Caco-2 (cell line): ENCODE measurements at regions of chr5 and their contacts with region 1.

Region 1: GRCh38 chr5:59188419-59189225 is 605.7 kb downstream of the RAB3C start:
- DNase-seq: peak; percentile 72 to 77
- H3K4me3 ChIP-seq: no peak overlapping the region; the same call in 1 of the 2 replicates
- H3K4me3 Mint-ChIP-seq: peak overlapping the region; percentile 56
- H3K27ac Mint-ChIP-seq: no peak overlapping the region
- H3K4me1 ChIP-seq: peaks cover 6% of the 10 kb centered on the region; the same call in 1 of the 2 replicates
- H3K4me1 Mint-ChIP-seq: peaks cover 19% of the 10 kb centered on the region
- H3K27me3 ChIP-seq: no peaks in the 10 kb centered on the region
- H3K27me3 Mint-ChIP-seq: no peaks in the 10 kb centered on the region
- CTCF ChIP-seq: peak; percentile 60 to 73

Region 2: GRCh38 chr5:59218424-59219045 is 29.9 kb after region 1 on chr5:
- CTCF ChIA-PET with region 1: interaction called, 3 read pairs
- POLR2A ChIA-PET with region 1: no interaction called
- intact Hi-C with region 1: loop called (anchors 2 kb)
- DNase-seq: no peak
- H3K4me3 ChIP-seq: no peak overlapping the region
- H3K4me3 Mint-ChIP-seq: no peak overlapping the region
- H3K27ac Mint-ChIP-seq: no peak overlapping the region
- H3K4me1 ChIP-seq: no peaks in the 10 kb centered on the region; the same call in 1 of the 2 replicates
- H3K4me1 Mint-ChIP-seq: peaks cover 10% of the 10 kb centered on the region
- H3K27me3 ChIP-seq: no peaks in the 10 kb centered on the region
- H3K27me3 Mint-ChIP-seq: no peaks in the 10 kb centered on the region
- CTCF ChIP-seq: peak; percentile 5 to 52

Region 3: DNA sequence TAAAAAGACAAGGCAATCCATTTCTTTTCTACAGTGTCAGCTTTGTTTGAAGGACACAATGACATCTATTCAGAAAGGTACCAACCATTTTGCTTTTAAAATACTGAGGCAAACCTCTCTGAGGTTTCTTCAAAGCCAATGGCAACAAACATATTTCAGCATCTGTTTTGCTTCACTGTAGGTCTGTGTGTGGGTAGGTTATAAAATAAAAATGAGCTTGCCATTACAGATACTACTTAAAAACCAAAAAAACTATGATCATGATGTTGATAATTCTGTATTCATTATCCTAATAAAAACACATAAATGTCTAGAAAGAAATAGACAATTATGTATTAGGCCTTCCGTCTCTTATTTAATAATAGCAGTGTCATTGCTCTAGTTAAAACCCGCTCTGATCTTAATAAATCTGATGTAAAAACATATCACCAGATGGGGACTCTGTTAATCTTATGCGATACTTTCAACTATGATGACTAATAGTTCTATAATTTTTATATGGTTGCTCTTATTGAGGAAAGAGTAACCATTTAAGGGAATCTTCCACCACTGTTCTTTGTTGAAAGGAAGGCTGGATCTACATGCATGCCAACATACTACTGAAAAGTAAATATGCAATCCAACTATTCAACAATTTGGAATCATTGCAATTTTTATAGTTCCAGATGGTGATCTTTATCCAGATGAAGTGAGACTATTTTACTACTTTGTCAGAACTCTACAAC is 57.7 kb after region 1 on chr5:
- CTCF ChIA-PET with region 1: no interaction called
- POLR2A ChIA-PET with region 1: no interaction called
- intact Hi-C with region 1: no loop called
- DNase-seq: no peak
- H3K4me3 ChIP-seq: no peak overlapping the region
- H3K4me3 Mint-ChIP-seq: no peak overlapping the region
- H3K27ac Mint-ChIP-seq: no peak overlapping the region
- H3K4me1 ChIP-seq: 0 out of 2 replicates have a peak, but pooled peaks cover 4% of the 10 kb centered on the region
- H3K4me1 Mint-ChIP-seq: no peaks in the 10 kb centered on the region
- H3K27me3 ChIP-seq: no peaks in the 10 kb centered on the region
- H3K27me3 Mint-ChIP-seq: no peaks in the 10 kb centered on the region
- CTCF ChIP-seq: no peak

Region 4: DNA sequence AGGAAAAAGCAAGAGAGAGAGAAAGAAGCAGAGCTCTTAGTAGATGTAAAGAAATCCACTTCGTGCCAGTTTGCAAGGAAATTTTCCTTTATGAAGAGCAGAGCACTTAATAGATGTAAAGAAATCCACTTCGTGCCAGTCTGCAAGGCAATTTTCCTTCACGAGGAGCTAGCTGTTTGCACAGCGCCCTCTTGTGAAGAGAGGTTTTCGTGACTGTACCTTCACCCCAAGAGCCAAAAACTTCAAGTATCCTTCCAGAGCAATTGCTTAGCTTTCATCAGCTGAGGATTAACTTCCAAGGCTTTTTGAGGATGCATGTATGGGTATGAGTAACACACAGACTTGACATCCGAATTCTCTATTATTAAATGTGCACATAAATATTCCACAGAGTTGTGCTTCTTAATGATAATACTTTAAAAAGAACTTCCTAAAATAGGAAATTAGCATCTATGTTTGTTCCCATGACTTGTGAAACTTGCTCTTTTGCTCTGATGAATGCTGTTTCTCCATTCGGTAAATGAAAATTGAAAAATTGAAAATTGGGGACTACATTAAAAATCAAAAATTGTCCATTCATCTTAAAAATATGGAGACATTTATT is 179.3 kb after region 1 on chr5:
- CTCF ChIA-PET with region 1: interaction called, 23 read pairs
- POLR2A ChIA-PET with region 1: no interaction called
- intact Hi-C with region 1: loop called (anchors 1 kb)
- DNase-seq: peak; percentile 63
- H3K4me3 ChIP-seq: no peak overlapping the region
- H3K4me3 Mint-ChIP-seq: no peak overlapping the region
- H3K27ac Mint-ChIP-seq: no peak overlapping the region
- H3K4me1 ChIP-seq: no peaks in the 10 kb centered on the region
- H3K4me1 Mint-ChIP-seq: no peaks in the 10 kb centered on the region
- H3K27me3 ChIP-seq: no peaks in the 10 kb centered on the region
- H3K27me3 Mint-ChIP-seq: no peaks in the 10 kb centered on the region
- CTCF ChIP-seq: peak; percentile 67 to 87

Region 5: DNA sequence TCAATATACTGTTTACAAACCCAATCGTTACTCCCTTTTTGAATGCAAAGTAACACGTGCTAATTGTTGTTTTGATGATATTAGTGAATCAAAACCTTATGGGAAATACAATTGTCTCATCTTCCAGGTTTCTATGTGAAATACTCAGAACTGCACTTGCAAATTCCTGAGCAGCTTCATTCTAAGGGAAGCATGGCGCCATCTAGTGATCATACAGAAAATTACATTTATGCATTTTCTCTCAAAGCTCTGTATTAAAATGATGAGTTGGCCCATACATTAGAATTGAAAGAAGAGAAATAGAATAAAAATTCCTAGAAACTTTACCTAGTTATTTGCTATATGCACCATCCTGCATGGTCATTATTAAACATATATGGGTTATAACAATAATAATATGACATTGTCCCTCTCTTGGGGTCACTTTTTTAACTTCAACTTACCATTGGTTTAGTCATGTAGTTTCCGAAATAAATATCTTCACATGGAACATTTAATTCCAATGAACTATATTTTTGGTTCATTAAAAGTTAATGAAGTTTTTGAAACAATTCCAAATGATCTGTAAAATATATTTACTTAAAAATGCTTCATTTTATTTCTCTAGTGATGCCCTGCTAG is 484.9 kb after region 1 on chr5:
- CTCF ChIA-PET with region 1: no interaction called
- POLR2A ChIA-PET with region 1: no interaction called
- intact Hi-C with region 1: loop called (anchors 5 kb)
- DNase-seq: peak in 1 of 2 experiments; percentile 52
- H3K4me3 ChIP-seq: no peak overlapping the region
- H3K4me3 Mint-ChIP-seq: no peak overlapping the region
- H3K27ac Mint-ChIP-seq: no peak overlapping the region
- H3K4me1 ChIP-seq: no peaks in the 10 kb centered on the region
- H3K4me1 Mint-ChIP-seq: no peaks in the 10 kb centered on the region
- H3K27me3 ChIP-seq: no peaks in the 10 kb centered on the region
- H3K27me3 Mint-ChIP-seq: peaks cover 2% of the 10 kb centered on the region
- CTCF ChIP-seq: peak; percentile 75 to 84

Region 6: DNA sequence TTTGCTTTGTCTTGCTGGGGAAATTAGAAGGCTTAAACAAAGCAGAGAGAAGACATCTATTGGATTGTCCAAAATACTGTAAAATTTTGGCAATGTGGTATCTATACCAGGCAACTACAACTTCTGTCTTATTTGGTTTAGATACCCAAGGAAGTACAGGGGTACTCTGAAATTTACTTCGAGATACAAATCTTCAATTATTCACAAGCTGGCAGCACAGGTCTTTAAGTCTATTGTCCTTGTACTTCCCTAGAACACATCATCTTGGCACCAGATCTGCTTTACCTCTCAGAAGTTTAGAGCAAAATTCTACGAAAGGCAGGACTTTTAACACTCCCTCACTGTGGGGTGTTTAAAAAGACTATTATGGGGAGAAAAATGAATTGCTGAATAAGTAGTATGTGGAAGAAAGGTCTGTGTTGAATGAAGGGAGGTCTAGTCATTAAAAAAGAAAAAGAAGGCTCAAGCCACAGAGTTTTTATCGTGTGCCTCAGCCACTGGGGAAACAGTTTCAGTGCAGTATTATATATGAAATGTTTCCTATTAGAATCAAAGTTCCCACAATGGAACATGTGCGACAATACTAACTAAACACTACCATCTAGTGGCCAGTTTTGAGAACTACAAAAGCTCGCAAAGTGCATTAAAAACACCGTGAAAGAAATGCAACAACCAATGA is 611.2 kb after region 1 on chr5:
- CTCF ChIA-PET with region 1: no interaction called
- POLR2A ChIA-PET with region 1: no interaction called
- intact Hi-C with region 1: loop called (anchors 10 kb)
- DNase-seq: peak in 1 of 2 experiments; percentile 56
- H3K4me3 ChIP-seq: no peak overlapping the region
- H3K4me3 Mint-ChIP-seq: no peak overlapping the region
- H3K27ac Mint-ChIP-seq: no peak overlapping the region
- H3K4me1 ChIP-seq: no peaks in the 10 kb centered on the region
- H3K4me1 Mint-ChIP-seq: no peaks in the 10 kb centered on the region
- H3K27me3 ChIP-seq: no peaks in the 10 kb centered on the region; the same call in 1 of the 2 replicates
- H3K27me3 Mint-ChIP-seq: peaks cover 15% of the 10 kb centered on the region
- CTCF ChIP-seq: peak; percentile 63 to 70